GM12878 (cell line): ENCODE measurements at regions of chr2 and their contacts with region 1.

Region 1: GRCh38 chr2:151828143-151828889 is at the start of gene ARL5A:
- DNase-seq: peak; percentile 92
- ATAC-seq: peak; percentile 92
- H3K4me3 ChIP-seq: peak within 1 kb of the TSS; percentile 92
- H3K27ac ChIP-seq: peak within 1 kb of the TSS; percentile 88
- H3K4me1 ChIP-seq: peaks cover 13% of the 10 kb centered on the region
- H3K27me3 ChIP-seq: no peaks in the 10 kb centered on the region
- CTCF ChIP-seq: no peak
- EP300 ChIP-seq: 0 out of 4 replicates have a peak, but pooled peaks of 1 of the 2 experiments have one; percentile 57
- POLR2A ChIP-seq: peak; percentile 94
- RAD21 ChIP-seq: no peak
- polyA plus RNA-seq, gene ARL5A: 9.4 to 10.9 TPM

Region 2: DNA sequence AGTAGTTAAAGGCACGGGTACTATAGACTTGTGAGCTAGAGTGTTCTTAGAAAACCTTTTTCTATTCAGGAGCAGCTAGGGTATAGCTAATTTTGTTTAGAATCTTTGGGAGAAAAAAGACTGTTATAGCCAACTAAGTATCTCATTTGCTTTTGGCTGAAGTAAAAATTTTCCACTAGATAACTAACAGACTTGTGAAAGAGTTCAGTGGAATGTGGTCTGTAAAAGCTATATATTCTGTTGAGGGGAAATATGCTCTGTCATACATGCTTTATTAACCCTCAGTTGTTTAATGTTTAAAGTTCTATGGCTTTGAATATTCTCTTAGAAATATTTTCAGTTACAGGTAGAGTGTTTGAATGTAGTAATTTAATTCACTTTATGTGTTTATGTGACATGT is 369.0 kb before region 1 on chr2:
- CTCF ChIA-PET with region 1: no interaction called
- POLR2A ChIA-PET with region 1: no interaction called
- RAD21 ChIA-PET with region 1: no interaction called
- SMC1A ChIA-PET with region 1: no interaction called
- in situ Hi-C with region 1: no loop called
- intact Hi-C with region 1: no loop called
- DNase-seq: no peak
- ATAC-seq: no peak
- H3K4me3 ChIP-seq: no peak overlapping the region
- H3K27ac ChIP-seq: no peak overlapping the region
- H3K4me1 ChIP-seq: no peaks in the 10 kb centered on the region
- H3K27me3 ChIP-seq: no peaks in the 10 kb centered on the region
- CTCF ChIP-seq: no peak
- EP300 ChIP-seq: no peak
- POLR2A ChIP-seq: no peak
- RAD21 ChIP-seq: no peak

Region 3: GRCh38 chr2:151845884-151846283 is 17.6 kb after region 1 on chr2:
- CTCF ChIA-PET with region 1: no interaction called
- POLR2A ChIA-PET with region 1: no interaction called
- RAD21 ChIA-PET with region 1: interaction called, 5 read pairs
- SMC1A ChIA-PET with region 1: interaction called, 11 read pairs
- in situ Hi-C with region 1: no loop called
- intact Hi-C with region 1: no loop called
- DNase-seq: no peak
- ATAC-seq: peak; percentile 57
- H3K4me3 ChIP-seq: no peak overlapping the region
- H3K27ac ChIP-seq: no peak overlapping the region; the same call in 1 of the 2 replicates
- H3K4me1 ChIP-seq: peaks cover 25% of the 10 kb centered on the region
- H3K27me3 ChIP-seq: no peaks in the 10 kb centered on the region
- CTCF ChIP-seq: no peak
- EP300 ChIP-seq: no peak
- POLR2A ChIP-seq: no peak
- RAD21 ChIP-seq: no peak